Left cardiac atrium (tissue), 4 donors: ENCODE measurements at regions of chr6 and their contacts with region 1.

Region 1: GRCh38 chr6:149405823-149406765 is 6.0 kb downstream of the SUMO4 start:
- DNase-seq: no peak
- ATAC-seq: no peak

Region 2: GRCh38 chr6:149316798-149317655 is 89.1 kb before region 1 on chr6:
- intact Hi-C with region 1: loop called in 1 of 2 experiments (anchors 5 kb)
- DNase-seq: peak; percentile 93
- ATAC-seq: peak; percentile 94 to 96